Activated naive CD4-positive, alpha-beta T cell treated with anti-CD3 and anti-CD28 coated beads for 36 hours (primary cell): ENCODE measurements at regions of chr17 and their contacts with region 1.

Region 1: GRCh38 chr17:8156246-8156992 is 4.2 kb upstream of the PER1 start:
- DNase-seq: peak; percentile 100
- H3K4me3 Mint-ChIP-seq: no peak overlapping the region
- H3K27ac Mint-ChIP-seq: no peak overlapping the region
- H3K4me1 Mint-ChIP-seq: peaks cover 62% of the 10 kb centered on the region
- H3K27me3 Mint-ChIP-seq: no peaks in the 10 kb centered on the region

Region 2: GRCh38 chr17:7614422-7615264 is 541.8 kb before region 1 on chr17 and contains the start of gene FXR2:
- CTCF ChIA-PET with region 1: interaction called, 3 read pairs
- intact Hi-C with region 1: loop called (anchors 10 kb)
- DNase-seq: peak; percentile 100
- H3K4me3 Mint-ChIP-seq: peak within 1 kb of the TSS; percentile 83
- H3K27ac Mint-ChIP-seq: peak within 1 kb of the TSS; percentile 84
- H3K4me1 Mint-ChIP-seq: peaks cover 32% of the 10 kb centered on the region
- H3K27me3 Mint-ChIP-seq: no peaks in the 10 kb centered on the region
- total RNA-seq, gene FXR2: 29.7 to 36.8 TPM

Region 3: GRCh38 chr17:8079291-8080207 is 76.9 kb before region 1 on chr17:
- CTCF ChIA-PET with region 1: interaction called, 3 read pairs
- intact Hi-C with region 1: loop called (anchors 5 kb)
- DNase-seq: peak; percentile 91
- H3K4me3 Mint-ChIP-seq: peak overlapping the region; percentile 95
- H3K27ac Mint-ChIP-seq: peak overlapping the region; percentile 88
- H3K4me1 Mint-ChIP-seq: peaks cover 13% of the 10 kb centered on the region
- H3K27me3 Mint-ChIP-seq: peaks cover 2% of the 10 kb centered on the region

Region 4: DNA sequence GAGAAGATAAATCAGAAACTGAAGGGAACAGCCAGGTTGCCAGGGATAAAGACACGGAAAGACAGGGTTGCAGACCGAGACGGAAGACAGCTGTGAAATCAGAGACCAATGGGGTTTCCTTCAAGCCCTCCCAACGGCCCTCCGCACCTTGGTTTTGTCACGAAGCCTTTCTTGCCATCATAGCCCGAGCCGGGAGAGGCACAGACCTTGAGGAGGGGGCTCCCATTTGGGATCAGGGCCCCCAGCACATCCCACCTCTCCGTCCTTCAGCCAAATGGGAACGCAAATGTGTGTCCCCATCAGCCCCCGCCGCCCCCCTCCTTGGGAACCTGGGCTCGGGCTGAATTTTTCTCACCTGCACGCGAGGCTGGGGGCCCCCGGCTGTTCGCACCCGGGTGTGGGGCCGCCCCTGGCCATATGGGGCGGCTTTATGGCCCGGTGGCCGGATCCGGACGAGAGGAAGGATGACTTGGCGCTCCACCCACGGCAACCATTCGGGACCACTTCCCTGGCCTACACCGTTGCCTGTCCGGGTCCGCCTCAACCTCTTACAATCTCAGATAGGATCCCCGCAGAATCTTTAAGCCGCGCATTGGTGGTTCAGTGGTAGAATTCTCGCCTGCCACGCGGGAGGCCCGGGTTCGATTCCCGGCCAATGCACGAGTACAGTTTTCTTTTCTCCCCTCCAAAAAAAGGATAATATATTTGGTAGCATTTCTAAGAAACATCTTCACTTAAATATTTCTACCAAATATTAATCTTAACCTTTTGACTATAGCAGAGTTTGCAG is 31.1 kb before region 1 on chr17:
- CTCF ChIA-PET with region 1: interaction called, 9 read pairs
- intact Hi-C with region 1: loop called (anchors 1 kb)
- DNase-seq: peak; percentile 96
- H3K4me3 Mint-ChIP-seq: peak overlapping the region; percentile 84
- H3K27ac Mint-ChIP-seq: peak overlapping the region; percentile 90
- H3K4me1 Mint-ChIP-seq: peaks cover 43% of the 10 kb centered on the region
- H3K27me3 Mint-ChIP-seq: peaks cover 29% of the 10 kb centered on the region

Region 5: GRCh38 chr17:8173056-8173870 is 16.8 kb after region 1 on chr17:
- CTCF ChIA-PET with region 1: interaction called, 5 read pairs
- intact Hi-C with region 1: loop called (anchors 1 kb)
- DNase-seq: peak; percentile 90
- H3K4me3 Mint-ChIP-seq: peak overlapping the region; percentile 69
- H3K27ac Mint-ChIP-seq: peak overlapping the region; percentile 100
- H3K4me1 Mint-ChIP-seq: peaks cover 40% of the 10 kb centered on the region
- H3K27me3 Mint-ChIP-seq: peaks cover 4% of the 10 kb centered on the region

Region 6: DNA sequence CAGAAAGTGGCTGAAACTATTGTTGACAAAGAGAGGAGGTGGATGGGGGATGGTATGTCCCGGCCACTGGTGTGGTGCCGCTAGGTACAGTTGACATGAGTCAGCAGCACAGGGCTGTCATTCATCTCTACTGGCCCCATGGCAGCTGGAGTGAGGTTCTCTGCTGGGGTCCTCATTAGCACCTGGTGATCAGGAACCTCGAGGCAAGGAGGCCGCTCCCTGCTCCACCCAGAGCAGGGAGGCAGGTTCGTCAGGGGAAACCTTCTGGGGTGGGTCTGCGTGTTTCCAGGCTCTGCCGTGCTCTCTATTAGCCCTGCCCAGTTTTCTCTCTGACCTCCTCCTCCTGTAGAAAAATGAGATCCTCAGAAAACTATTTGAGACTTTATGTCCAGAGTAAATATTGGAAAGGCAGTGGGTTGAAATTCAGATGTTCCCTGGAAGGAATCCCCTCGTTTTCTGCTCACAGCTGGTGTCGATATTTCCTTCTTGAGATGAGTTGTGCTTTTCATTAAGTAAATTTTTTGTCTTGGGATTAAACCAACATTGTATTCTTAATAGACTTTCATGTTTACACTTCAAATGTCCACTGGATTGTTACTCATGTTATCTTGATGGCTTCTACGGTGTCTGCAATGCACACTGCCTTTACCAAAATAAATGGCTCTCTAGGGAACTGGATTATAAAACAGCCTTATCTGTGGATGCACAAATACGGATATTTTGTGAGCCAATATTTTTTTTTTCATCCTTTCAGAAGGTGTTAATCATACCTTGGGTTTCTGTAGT is 872.0 kb after region 1 on chr17:
- CTCF ChIA-PET with region 1: no interaction called
- intact Hi-C with region 1: no loop called
- DNase-seq: no peak
- H3K4me3 Mint-ChIP-seq: no peak overlapping the region
- H3K27ac Mint-ChIP-seq: no peak overlapping the region
- H3K4me1 Mint-ChIP-seq: peaks cover 2% of the 10 kb centered on the region
- H3K27me3 Mint-ChIP-seq: peaks cover 51% of the 10 kb centered on the region

Region 7: GRCh38 chr17:9132944-9133575 is 976.6 kb after region 1 on chr17:
- CTCF ChIA-PET with region 1: no interaction called
- intact Hi-C with region 1: no loop called
- DNase-seq: no peak
- H3K4me3 Mint-ChIP-seq: no peak overlapping the region
- H3K27ac Mint-ChIP-seq: no peak overlapping the region
- H3K4me1 Mint-ChIP-seq: no peaks in the 10 kb centered on the region
- H3K27me3 Mint-ChIP-seq: no peaks in the 10 kb centered on the region